K562 (cell line): ENCODE measurements at regions of chr17 and their contacts with region 1.

Region 1: DNA sequence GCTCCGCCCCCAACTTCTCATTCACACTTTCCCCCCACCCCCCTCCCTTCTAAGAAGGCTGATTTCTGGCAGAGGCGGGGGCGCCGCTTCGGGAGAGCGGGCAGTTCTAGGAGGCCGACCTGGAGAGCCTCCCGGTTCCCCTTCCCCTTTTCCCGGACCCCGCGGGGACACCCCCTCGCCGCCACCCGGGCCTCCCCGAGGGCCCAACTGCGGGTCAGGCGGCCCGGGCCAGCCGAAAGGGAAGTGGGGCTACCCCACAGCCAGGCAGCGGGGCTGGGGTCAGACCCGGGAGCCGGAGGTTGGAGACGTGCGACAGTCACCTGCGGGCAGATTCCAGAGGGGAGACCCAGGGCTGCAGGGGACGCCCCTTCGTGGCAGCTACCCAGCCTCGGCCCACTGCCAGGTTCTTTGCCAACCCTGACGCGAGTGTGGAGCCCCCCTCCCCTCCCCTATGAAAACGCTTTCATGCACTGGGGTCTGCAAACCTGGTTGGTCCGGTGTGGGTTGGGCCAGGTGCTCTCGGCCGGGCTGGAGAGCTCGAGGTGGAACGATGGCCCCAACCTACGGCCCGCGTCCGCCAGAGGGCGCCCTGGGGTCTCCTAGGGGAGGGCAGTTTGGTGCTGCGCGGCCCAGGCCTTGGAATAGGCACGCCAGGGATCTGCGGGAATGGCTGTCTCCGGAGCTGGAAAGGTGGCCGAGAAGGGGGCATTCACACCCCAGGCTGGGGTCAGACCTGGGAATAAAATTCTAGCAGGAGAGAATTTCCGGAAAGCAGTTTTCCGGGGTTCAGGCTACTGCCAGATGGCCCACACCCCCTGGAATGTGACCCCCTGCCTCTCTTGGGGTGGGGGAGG is 721 bp upstream of the SOCS3 start:
- DNase-seq: peak; percentile 88 to 92 (median 90)
- ATAC-seq: peak; percentile 84
- H3K4me3 ChIP-seq: peak overlapping the region; percentile 90
- H3K27ac ChIP-seq: peak overlapping the region; percentile 65
- H3K4me1 ChIP-seq: peaks cover 39 to 63% of the 10 kb centered on the region in 2 experiments
- H3K27me3 ChIP-seq: 0 out of 5 replicates have a peak, but pooled peaks cover 0 to 4% of the 10 kb centered on the region in 2 experiments
- CTCF ChIP-seq: peak; percentile 89 to 92 (median 91)
- EP300 ChIP-seq: peak; percentile 17; the same call in 1 of the 2 replicates
- POLR2A ChIP-seq: no peak
- RAD21 ChIP-seq: peak; percentile 69 to 89

Region 2: GRCh38 chr17:77963441-77963840 is 397.2 kb before region 1 on chr17:
- CTCF ChIA-PET with region 1: no interaction called
- POLR2A ChIA-PET with region 1: no interaction called
- in situ Hi-C with region 1: no loop called
- intact Hi-C with region 1: no loop called
- DNase-seq: peak; percentile 17 to 80 (median 43)
- ATAC-seq: peak; percentile 85
- H3K4me3 ChIP-seq: no peak overlapping the region
- H3K27ac ChIP-seq: no peak overlapping the region
- H3K4me1 ChIP-seq: peaks cover 11 to 14% of the 10 kb centered on the region in 2 experiments; a peak in 4 of 5 replicates
- H3K27me3 ChIP-seq: no peaks in the 10 kb centered on the region
- CTCF ChIP-seq: no peak
- EP300 ChIP-seq: no peak
- POLR2A ChIP-seq: no peak
- RAD21 ChIP-seq: no peak

Region 3: GRCh38 chr17:78289802-78290363 is 70.7 kb before region 1 on chr17:
- CTCF ChIA-PET with region 1: interaction called, 12 read pairs
- POLR2A ChIA-PET with region 1: interaction called, 3 read pairs
- in situ Hi-C with region 1: no loop called
- intact Hi-C with region 1: loop called (anchors 1 kb)
- DNase-seq: peak; percentile 76 to 93 (median 81)
- ATAC-seq: peak; percentile 99
- H3K4me3 ChIP-seq: no peak overlapping the region
- H3K27ac ChIP-seq: no peak overlapping the region; the same call in 2 of the 3 replicates
- H3K4me1 ChIP-seq: peaks cover 4 to 28% of the 10 kb centered on the region in 2 experiments; a peak in 4 of 5 replicates
- H3K27me3 ChIP-seq: no peaks in the 10 kb centered on the region
- CTCF ChIP-seq: peak; percentile 86 to 92 (median 89)
- EP300 ChIP-seq: no peak
- POLR2A ChIP-seq: no peak
- RAD21 ChIP-seq: peak; percentile 89 to 96

Region 4: DNA sequence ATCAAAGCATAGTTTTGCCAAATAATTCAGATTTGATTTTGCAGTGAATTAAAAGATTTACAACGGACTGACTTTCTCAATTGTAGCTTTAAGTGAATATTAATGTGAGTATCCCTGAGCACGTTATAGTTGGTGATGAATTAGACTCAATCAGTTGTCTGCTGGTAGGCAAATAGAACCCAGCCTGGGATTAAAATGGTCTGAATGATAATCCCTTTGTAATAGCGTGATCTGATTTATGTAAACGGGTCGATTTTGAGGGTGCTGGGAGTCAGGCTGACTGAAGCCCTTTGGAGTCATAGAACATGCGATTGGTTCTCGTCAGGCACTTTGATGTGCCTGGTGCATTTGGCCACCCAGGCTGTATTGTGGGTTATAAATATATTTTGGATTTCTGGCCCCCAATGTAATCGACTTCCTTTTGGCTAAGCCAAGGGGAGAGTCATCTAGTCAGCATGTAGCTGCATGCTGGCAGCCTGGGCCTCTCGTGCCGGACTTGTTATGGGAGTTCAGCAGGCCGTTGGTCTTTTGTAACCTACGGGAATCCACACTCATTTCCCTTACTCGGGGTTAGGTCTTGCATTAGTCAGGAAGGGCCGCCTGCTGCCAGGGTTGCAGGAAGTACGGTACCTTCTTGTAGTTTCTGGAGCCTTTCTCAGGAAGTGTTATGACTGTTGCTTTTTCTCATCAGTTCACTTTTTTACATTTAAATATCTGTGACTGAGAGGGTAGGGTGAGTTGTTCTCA is 23.3 kb after region 1 on chr17:
- CTCF ChIA-PET with region 1: no interaction called
- POLR2A ChIA-PET with region 1: no interaction called
- in situ Hi-C with region 1: no loop called
- intact Hi-C with region 1: no loop called
- DNase-seq: no peak
- ATAC-seq: no peak
- H3K4me3 ChIP-seq: no peak overlapping the region
- H3K27ac ChIP-seq: no peak overlapping the region
- H3K4me1 ChIP-seq: peaks cover 31 to 34% of the 10 kb centered on the region in 2 experiments
- H3K27me3 ChIP-seq: no peaks in the 10 kb centered on the region
- CTCF ChIP-seq: no peak
- EP300 ChIP-seq: no peak
- POLR2A ChIP-seq: no peak
- RAD21 ChIP-seq: no peak

Region 5: DNA sequence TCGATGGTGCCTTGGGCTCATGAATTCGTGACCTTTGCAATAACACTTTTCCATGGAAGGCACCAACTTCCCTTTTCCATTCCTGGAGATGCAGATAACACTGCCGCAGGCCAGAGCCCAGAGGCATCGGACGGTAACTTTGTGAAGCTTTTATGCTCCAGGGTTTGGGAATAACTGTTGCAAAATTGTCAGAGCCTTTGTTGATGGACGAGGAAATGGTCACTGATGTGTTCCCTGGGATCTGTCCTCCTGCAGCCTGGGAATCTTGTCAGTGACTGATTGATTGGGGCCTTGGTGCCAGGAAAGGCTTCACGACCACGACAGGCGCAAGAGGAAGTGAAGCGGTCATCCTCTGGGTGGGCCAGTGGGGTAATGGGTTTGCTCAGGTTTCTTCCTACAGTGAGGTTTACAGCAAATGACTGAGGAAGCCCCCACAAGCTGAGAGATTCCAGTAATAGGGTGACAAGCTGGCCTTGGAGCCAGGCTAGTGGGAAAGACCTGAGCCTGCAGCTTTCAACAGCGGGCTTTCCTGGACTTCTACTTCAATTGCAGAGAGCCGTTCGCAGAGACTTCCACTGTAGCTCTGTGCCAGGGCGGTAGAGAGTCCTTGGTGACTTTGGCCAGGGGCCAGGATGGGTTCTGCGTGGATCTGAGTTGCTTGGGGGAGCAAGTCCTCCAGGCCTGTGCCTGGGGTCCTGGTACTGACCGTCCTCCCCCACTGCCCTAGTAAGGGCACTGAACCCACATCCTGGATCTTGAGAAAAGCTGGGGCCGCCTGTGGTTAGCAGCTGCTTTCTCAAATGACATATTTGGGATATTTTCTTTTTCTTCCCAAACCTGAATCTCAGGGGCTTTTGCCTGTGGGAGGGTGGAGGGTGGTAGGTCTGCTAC is 55.5 kb after region 1 on chr17:
- CTCF ChIA-PET with region 1: no interaction called
- POLR2A ChIA-PET with region 1: interaction called, 3 read pairs
- in situ Hi-C with region 1: no loop called
- intact Hi-C with region 1: loop called (anchors 2 kb)
- DNase-seq: no peak
- ATAC-seq: no peak
- H3K4me3 ChIP-seq: no peak overlapping the region
- H3K27ac ChIP-seq: no peak overlapping the region
- H3K4me1 ChIP-seq: peaks cover 30 to 47% of the 10 kb centered on the region in 2 experiments
- H3K27me3 ChIP-seq: no peaks in the 10 kb centered on the region
- CTCF ChIP-seq: no peak
- EP300 ChIP-seq: no peak
- POLR2A ChIP-seq: no peak
- RAD21 ChIP-seq: no peak

Region 6: GRCh38 chr17:78421484-78422266 is 61.1 kb after region 1 on chr17:
- CTCF ChIA-PET with region 1: interaction called, 12 read pairs
- POLR2A ChIA-PET with region 1: interaction called, 4 read pairs
- in situ Hi-C with region 1: no loop called
- intact Hi-C with region 1: loop called (anchors 1 kb)
- DNase-seq: peak; percentile 86 to 95 (median 92)
- ATAC-seq: peak; percentile 97
- H3K4me3 ChIP-seq: no peak overlapping the region
- H3K27ac ChIP-seq: 0 out of 3 replicates have a peak overlapping the region, but pooled peaks have one; percentile 39
- H3K4me1 ChIP-seq: peaks cover 12 to 28% of the 10 kb centered on the region in 2 experiments
- H3K27me3 ChIP-seq: no peaks in the 10 kb centered on the region
- CTCF ChIP-seq: peak; percentile 98 to 100 (median 99)
- EP300 ChIP-seq: 0 out of 2 replicates have a peak, but pooled peaks have one; percentile 21
- POLR2A ChIP-seq: no peak
- RAD21 ChIP-seq: peak; percentile 93 to 96